CD8-positive, alpha-beta T cell (primary cell): ENCODE measurements at regions of chr5 and their contacts with region 1.

Region 1: DNA sequence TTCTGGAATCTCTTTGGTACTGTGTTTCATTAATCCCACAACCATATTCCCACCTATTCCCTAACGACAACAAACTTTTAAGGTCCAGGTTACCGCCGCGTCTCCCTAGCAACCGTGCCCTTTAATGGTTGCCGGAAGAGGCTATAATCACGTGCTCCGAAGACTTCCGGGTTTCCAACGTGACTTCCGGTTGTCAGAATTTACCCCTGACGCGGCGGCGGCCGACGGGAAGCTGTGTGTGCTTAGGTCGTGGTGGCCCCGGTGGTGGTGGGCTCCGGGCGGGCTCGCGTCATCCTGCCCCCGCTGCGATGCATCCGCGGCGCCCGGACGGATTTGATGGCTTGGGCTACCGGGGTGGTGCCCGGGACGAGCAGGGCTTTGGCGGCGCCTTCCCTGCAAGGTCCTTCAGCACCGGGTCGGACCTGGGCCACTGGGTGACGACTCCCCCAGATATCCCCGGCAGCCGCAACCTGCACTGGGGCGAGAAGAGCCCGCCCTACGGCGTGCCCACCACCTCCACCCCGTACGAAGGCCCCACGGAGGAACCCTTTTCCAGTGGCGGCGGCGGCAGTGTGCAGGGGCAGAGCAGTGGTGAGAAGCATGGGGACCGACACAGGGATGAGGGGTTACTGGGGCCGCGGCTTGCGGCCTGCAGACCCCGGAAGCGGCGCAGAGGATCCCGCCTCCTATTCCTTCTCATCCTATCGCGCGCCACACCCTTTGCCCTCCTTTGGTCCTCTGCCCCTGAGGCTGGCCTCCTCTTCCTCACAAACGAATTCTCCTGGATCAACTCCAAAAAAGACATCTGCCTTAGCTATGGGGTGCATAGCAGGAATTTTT is at the start of gene SLC25A46:
- DNase-seq: peak; percentile 76 to 96 (median 88)
- ATAC-seq: peak; percentile 79
- H3K4me3 ChIP-seq: peak within 1 kb of the TSS; percentile 69 to 91
- H3K4me3 Mint-ChIP-seq: peak within 1 kb of the TSS; percentile 96
- H3K27ac ChIP-seq: peak within 1 kb of the TSS; percentile 88 to 97
- H3K27ac Mint-ChIP-seq: peak within 1 kb of the TSS; percentile 97
- H3K4me1 ChIP-seq: peaks cover 15% of the 10 kb centered on the region
- H3K4me1 Mint-ChIP-seq: peaks cover 34% of the 10 kb centered on the region
- H3K27me3 ChIP-seq: no peaks in the 10 kb centered on the region
- H3K27me3 Mint-ChIP-seq: no peaks in the 10 kb centered on the region
- CTCF ChIP-seq: no peak
- total RNA-seq, gene SLC25A46: 13.6 to 14.6 TPM

Region 2: GRCh38 chr5:108753877-108754276 is 1985.2 kb before region 1 on chr5:
- CTCF ChIA-PET with region 1: no interaction called
- POLR2A ChIA-PET with region 1: no interaction called
- intact Hi-C with region 1: loop called in 1 of 2 experiments (anchors 5 kb)
- DNase-seq: no peak
- ATAC-seq: no peak
- H3K4me3 ChIP-seq: no peak overlapping the region
- H3K4me3 Mint-ChIP-seq: no peak overlapping the region
- H3K27ac ChIP-seq: no peak overlapping the region
- H3K27ac Mint-ChIP-seq: no peak overlapping the region
- H3K4me1 ChIP-seq: no peaks in the 10 kb centered on the region
- H3K4me1 Mint-ChIP-seq: peaks cover 6% of the 10 kb centered on the region
- H3K27me3 ChIP-seq: no peaks in the 10 kb centered on the region
- H3K27me3 Mint-ChIP-seq: no peaks in the 10 kb centered on the region
- CTCF ChIP-seq: no peak

Region 3: GRCh38 chr5:110726249-110727024 is 12.6 kb before region 1 on chr5 and contains the start of gene TMEM232:
- CTCF ChIA-PET with region 1: interaction called, 5 read pairs
- POLR2A ChIA-PET with region 1: no interaction called
- intact Hi-C with region 1: loop called in 1 of 2 experiments (anchors 1 kb)
- DNase-seq: peak; percentile 36 to 89 (median 74)
- ATAC-seq: peak; percentile 99
- H3K4me3 ChIP-seq: peak within 1 kb of the TSS; percentile 41 to 42
- H3K4me3 Mint-ChIP-seq: peak within 1 kb of the TSS; percentile 77
- H3K27ac ChIP-seq: no peak within 1 kb of the TSS
- H3K27ac Mint-ChIP-seq: peak within 1 kb of the TSS; percentile 41
- H3K4me1 ChIP-seq: no peaks in the 10 kb centered on the region
- H3K4me1 Mint-ChIP-seq: no peaks in the 10 kb centered on the region
- H3K27me3 ChIP-seq: no peaks in the 10 kb centered on the region
- H3K27me3 Mint-ChIP-seq: peaks cover 2% of the 10 kb centered on the region
- CTCF ChIP-seq: no peak
- total RNA-seq, gene TMEM232: 0.92 to 1.0 TPM

Region 4: GRCh38 chr5:110852053-110852452 is 113.0 kb after region 1 on chr5:
- CTCF ChIA-PET with region 1: no interaction called
- POLR2A ChIA-PET with region 1: no interaction called
- intact Hi-C with region 1: no loop called
- DNase-seq: no peak
- ATAC-seq: no peak
- H3K4me3 ChIP-seq: no peak overlapping the region
- H3K4me3 Mint-ChIP-seq: no peak overlapping the region
- H3K27ac ChIP-seq: no peak overlapping the region
- H3K27ac Mint-ChIP-seq: no peak overlapping the region
- H3K4me1 ChIP-seq: no peaks in the 10 kb centered on the region
- H3K4me1 Mint-ChIP-seq: no peaks in the 10 kb centered on the region
- H3K27me3 ChIP-seq: no peaks in the 10 kb centered on the region
- H3K27me3 Mint-ChIP-seq: peaks cover 2% of the 10 kb centered on the region
- CTCF ChIP-seq: no peak

Region 5: DNA sequence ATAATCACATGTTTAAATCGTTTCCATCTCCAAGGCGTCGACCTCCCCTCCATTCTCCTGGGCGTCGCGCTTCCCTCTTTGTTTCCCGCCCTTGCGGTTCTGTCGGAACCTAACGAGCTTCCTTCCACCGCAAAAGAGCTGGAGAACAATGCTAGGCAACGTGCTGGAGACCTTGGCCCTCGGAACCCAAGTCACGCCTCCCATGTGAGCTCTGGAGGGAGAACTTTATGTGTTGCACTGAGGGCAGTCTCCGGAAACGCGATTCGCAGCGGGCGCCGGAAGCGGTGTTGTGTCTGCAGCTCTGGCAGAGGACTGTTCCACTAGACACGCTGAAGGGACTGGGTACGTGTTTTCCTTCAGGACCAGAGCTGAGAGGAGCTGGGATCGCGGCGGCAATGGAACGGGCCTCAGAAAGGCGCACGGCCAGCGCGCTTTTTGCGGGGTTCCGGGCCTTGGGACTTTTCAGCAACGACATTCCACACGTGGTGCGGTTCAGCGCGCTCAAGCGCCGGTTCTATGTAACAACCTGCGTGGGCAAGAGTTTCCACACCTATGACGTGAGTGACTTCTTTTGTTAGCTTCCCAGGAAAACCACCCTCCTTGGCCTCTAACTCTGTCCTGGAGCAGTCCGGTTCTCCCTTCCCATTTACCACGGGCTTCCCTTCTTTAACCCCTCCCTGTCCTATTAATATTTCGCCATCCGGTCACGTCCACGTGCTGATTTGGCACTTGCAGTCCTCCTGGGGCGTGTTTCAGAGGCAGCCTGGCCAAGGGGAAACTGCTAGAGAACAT is 353.2 kb after region 1 on chr5 and contains the start of gene WDR36:
- CTCF ChIA-PET with region 1: no interaction called
- POLR2A ChIA-PET with region 1: interaction called, 11 read pairs
- intact Hi-C with region 1: loop called (anchors 1 to 2 kb)
- DNase-seq: peak; percentile 77 to 94 (median 86)
- ATAC-seq: peak; percentile 92
- H3K4me3 ChIP-seq: peak within 1 kb of the TSS; percentile 96
- H3K4me3 Mint-ChIP-seq: peak within 1 kb of the TSS; percentile 95
- H3K27ac ChIP-seq: peak within 1 kb of the TSS; percentile 86 to 89
- H3K27ac Mint-ChIP-seq: peak within 1 kb of the TSS; percentile 94
- H3K4me1 ChIP-seq: peaks cover 24% of the 10 kb centered on the region
- H3K4me1 Mint-ChIP-seq: peaks cover 38% of the 10 kb centered on the region
- H3K27me3 ChIP-seq: no peaks in the 10 kb centered on the region
- H3K27me3 Mint-ChIP-seq: peaks cover 4% of the 10 kb centered on the region
- CTCF ChIP-seq: no peak
- total RNA-seq, gene WDR36: 29.5 to 32.6 TPM

Region 6: GRCh38 chr5:111512375-111513130 is 773.5 kb after region 1 on chr5 and contains the start of gene STARD4:
- CTCF ChIA-PET with region 1: no interaction called
- POLR2A ChIA-PET with region 1: no interaction called
- intact Hi-C with region 1: loop called (anchors 2 to 10 kb)
- DNase-seq: peak; percentile 89 to 97 (median 95)
- ATAC-seq: peak; percentile 94
- H3K4me3 ChIP-seq: peak within 1 kb of the TSS; percentile 96 to 97
- H3K4me3 Mint-ChIP-seq: peak within 1 kb of the TSS; percentile 96
- H3K27ac ChIP-seq: peak within 1 kb of the TSS; percentile 75 to 92
- H3K27ac Mint-ChIP-seq: peak within 1 kb of the TSS; percentile 95
- H3K4me1 ChIP-seq: peaks cover 26% of the 10 kb centered on the region
- H3K4me1 Mint-ChIP-seq: peaks cover 41% of the 10 kb centered on the region
- H3K27me3 ChIP-seq: no peaks in the 10 kb centered on the region
- H3K27me3 Mint-ChIP-seq: no peaks in the 10 kb centered on the region
- CTCF ChIP-seq: no peak
- total RNA-seq, gene STARD4: 31.7 to 32.4 TPM

Region 7: DNA sequence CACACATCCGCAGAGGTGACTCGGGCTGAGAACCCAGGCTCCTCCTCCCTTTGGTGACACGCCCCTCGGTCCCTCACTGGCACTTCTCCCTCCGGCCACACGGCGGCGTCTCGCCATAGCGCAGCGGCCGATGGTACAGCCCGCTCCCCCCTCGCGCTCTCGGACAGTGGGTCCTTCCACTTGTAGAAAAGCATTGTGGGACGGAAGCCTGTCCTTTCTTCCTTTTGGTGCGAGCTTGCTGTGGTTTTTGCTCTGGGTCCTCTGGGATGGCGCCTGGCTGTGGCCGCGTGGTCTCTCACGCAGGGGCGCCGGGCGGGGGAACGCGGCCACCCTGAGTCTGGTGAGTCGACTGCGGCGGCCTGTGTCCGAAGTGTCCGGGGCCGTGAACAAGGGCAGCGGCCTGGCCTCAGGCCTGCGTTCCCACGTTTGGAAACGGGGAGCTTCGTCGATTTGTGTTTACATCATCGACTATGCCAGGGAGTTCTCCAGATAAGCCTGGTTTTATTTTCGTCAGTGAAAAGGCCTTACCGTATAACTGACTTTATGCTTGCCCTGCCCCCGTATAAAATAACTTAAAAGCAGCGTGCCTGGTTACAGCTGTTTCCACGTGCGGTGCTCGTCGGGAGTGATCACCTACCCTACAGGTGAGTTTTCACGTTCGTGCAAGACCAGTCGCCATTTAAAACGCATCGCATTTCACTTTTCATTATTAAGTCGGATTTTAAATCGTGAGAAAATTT is 1421.8 kb after region 1 on chr5:
- CTCF ChIA-PET with region 1: no interaction called
- POLR2A ChIA-PET with region 1: no interaction called
- intact Hi-C with region 1: loop called (anchors 2 to 5 kb)
- DNase-seq: peak; percentile 85 to 96 (median 92)
- ATAC-seq: peak; percentile 99
- H3K4me3 ChIP-seq: peak overlapping the region; percentile 74 to 82
- H3K4me3 Mint-ChIP-seq: peak overlapping the region; percentile 95
- H3K27ac ChIP-seq: peak overlapping the region; percentile 58 to 70
- H3K27ac Mint-ChIP-seq: peak overlapping the region; percentile 93
- H3K4me1 ChIP-seq: peaks cover 20% of the 10 kb centered on the region
- H3K4me1 Mint-ChIP-seq: peaks cover 40% of the 10 kb centered on the region
- H3K27me3 ChIP-seq: no peaks in the 10 kb centered on the region
- H3K27me3 Mint-ChIP-seq: no peaks in the 10 kb centered on the region
- CTCF ChIP-seq: peak; percentile 85